ENCODE measurements at regions of chr3 and their contacts with region 1.

Region 1: DNA sequence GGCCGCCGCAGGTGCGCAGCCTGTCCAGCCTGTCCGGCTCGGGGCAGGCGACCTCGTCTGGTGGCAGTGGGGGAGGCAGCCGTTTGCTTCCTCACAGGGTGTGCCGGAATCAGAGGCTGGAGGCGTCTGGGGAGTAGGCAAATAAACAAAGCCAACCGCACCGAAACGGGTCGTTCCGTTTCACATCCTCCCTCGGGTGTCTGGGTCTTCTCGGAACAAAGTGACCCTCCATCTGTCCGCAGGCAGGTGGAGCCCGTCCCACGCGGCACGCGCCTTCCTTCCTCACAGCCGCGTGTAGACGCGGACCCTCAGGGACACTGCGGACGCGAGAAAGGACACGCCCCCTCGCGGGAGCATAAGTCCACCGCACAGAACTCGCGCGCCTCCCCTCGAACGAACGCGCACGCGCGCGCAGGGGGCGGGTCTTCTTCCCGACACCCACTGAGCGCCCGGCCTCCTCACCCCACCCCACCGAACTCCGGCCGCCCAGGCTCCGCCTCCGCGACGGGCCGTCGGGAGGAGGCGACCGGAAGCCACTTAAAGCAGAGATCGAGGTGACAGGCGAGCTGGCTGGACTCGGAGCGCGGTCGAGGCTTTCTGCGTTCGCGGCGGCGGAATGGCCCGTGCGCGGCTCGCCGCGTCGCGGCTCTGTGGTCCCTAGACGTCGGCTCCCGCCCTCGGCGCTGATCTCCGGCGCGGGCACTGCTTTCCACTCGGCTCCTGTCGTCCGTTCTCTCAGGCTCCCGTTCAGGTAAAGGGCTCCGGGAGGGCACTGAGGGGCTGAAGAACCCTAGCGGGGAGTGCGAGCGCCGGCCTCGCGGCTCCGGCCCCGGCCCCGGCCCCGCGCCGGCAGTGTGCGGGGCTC is at the start of gene TIPARP:
- DNase-seq: peak; percentile 100
- ATAC-seq: peak; percentile 96
- total RNA-seq, gene TIPARP: 28.2 TPM

Region 2: DNA sequence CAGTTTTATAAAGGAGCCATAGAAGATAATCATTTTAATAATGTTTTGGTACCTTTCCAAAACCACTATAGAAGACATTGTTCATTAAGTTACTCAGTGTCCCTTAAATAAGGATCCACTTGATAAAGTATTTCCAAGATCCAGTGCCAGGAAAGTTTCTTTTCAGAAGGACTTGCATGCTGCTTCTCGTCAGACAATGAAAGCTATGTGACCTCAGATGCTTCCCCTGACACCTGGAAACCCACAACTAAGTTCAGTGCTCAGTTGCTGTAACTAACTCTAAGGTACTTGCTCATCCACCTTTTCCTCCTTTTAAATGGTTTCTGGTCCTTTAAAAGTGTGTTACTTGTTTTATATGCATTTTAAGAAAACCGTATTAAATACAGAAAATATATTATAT is 126.6 kb before region 1 on chr3:
- intact Hi-C with region 1: loop called (anchors 5 kb)
- DNase-seq: no peak
- ATAC-seq: peak; percentile 81

Region 3: DNA sequence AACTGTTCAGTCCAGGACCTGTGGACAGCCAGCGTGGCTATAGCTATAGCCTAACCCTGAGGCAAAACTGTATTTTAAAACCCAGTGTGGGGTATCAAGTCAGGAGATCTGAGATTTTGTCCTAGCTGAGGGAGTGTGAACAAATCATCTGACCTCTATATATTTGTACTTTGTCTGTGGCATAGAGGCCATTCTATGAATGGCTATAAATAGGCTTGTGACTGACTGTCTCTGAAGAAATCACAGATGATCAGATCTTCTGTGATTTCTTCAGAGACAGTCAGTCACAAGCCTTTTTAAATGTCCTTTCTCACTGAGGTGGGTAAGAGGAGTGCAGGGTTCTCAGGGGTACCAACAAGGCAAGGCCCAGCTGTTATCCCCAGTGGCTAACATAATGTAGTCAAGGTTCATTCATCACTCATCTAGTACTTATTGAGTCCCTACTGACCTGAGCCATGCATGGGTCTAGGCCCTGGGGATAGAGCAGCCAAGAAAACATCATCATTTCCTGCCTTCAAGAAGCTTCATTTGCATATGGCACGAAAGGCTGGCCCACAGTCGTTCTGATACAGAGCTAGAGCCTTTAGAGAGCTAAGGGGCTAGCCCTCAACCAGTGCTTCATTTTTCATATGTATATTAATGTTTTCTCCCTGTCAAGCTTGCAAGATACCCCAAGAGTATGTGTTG is 53.4 kb after region 1 on chr3:
- intact Hi-C with region 1: no loop called
- DNase-seq: no peak
- ATAC-seq: peak; percentile 24

Region 4: DNA sequence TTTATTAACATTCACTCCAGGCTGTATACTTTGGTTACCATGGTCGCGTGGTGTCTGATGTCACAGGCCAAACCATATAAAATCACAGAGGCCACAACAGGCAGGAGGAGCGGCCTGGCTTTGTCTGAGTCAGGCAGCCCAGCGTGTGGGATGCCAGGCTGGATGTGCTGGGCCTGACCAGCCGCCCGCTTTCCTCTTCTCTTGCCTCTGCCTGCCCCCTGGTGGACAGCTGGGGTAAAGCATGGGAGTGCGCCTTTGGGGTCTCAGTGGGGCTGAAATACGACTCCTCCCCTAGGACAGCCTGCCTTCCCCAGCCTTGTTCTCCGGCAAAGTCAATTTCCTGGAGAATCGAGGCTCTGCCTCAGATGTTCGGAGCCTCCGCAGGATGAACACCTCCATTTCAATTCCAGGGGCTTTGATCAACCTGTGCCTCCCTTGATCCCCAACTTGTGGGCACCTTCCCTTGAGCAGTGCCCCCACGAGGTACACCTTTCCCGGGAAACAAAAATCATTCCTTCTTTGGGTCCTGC is 407.5 kb after region 1 on chr3:
- intact Hi-C with region 1: loop called (anchors 10 kb)
- DNase-seq: peak; percentile 93
- ATAC-seq: peak; percentile 83